Thyroid gland (tissue), 4 donors: ENCODE measurements at regions of chr16 and their contacts with region 1.

Region 1: DNA sequence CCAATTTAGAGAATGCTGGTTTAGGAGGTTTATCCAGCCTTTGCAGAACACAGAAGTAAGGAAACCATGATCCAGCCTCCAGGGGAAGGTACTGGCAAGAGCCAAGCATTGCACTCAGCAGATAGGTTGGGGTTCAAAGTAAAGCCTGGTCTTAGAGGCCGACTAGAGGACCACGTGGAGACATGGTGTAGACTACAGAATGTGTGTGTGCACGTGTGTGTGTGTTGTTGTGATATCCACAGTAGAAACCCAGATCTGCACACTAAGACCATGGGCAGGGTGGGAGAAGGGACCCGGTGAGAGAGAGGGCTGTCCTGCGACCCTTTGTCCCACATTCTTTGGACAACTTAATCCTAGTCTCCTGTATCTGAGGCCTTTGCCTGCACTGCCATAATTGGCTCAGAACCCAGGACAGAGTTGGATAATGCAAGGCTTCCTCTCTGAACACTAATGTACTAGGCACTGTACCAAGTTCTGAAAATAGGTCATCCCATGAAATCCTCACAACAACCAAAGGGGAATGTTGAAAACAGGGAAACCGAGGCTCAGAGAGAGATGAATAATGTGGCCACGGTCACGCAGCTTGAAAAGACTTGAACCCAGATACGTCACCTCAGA is 325.1 kb upstream of the HSBP1 start:
- DNase-seq: no peak
- H3K4me3 ChIP-seq: no peak overlapping the region
- H3K27ac ChIP-seq: no peak overlapping the region
- H3K4me1 ChIP-seq: peaks cover 5 to 8% of the 10 kb centered on the region in 2 donors
- H3K27me3 ChIP-seq: no peaks in the 10 kb centered on the region
- CTCF ChIP-seq: no peak
- POLR2A ChIP-seq: no peak

Region 2: GRCh38 chr16:83539736-83540490 is 57.3 kb after region 1 on chr16:
- intact Hi-C with region 1: no loop called
- DNase-seq: no peak
- H3K4me3 ChIP-seq: no peak overlapping the region
- H3K27ac ChIP-seq: no peak overlapping the region
- H3K4me1 ChIP-seq: no peaks in the 10 kb centered on the region
- H3K27me3 ChIP-seq: no peaks in the 10 kb centered on the region
- CTCF ChIP-seq: no peak
- POLR2A ChIP-seq: no peak

Region 3: DNA sequence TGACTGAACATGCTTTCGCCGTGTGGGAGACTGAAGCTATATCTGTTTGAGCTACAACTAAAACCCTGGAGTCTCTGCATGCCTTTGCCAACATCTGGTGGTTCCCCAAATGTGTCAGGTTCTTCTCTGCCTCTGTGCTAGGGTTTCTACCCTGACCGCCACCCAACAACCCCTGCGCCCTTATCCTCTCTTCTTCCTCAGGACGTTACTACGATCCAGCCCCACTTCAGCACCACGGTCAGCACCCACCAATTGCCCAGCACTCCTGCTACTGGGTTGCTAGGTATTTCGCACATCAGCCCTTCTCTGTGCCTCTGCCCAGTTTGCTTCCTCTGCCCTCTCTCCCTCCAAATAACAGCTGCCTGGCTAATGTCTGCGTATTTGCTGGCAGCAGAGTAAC is 218.8 kb after region 1 on chr16:
- intact Hi-C with region 1: loop called (anchors 10 kb)
- DNase-seq: peak; percentile 47 to 77
- H3K4me3 ChIP-seq: no peak overlapping the region
- H3K27ac ChIP-seq: no peak overlapping the region
- H3K4me1 ChIP-seq: no peaks in the 10 kb centered on the region
- H3K27me3 ChIP-seq: no peaks in the 10 kb centered on the region
- CTCF ChIP-seq: no peak
- POLR2A ChIP-seq: no peak